Tibial artery (tissue), 4 donors: ENCODE measurements at regions of chr5 and their contacts with region 1.

Region 1: GRCh38 chr5:38548064-38548759 is 8.2 kb downstream of the LIFR start:
- DNase-seq: no peak
- H3K4me3 ChIP-seq: no peak overlapping the region
- H3K27ac ChIP-seq: peak overlapping the region; percentile 43 to 54
- H3K4me1 ChIP-seq: peaks cover 0 to 74% (median 28%) of the 10 kb centered on the region in 4 donors
- H3K27me3 ChIP-seq: no peaks in the 10 kb centered on the region
- CTCF ChIP-seq: no peak

Region 2: DNA sequence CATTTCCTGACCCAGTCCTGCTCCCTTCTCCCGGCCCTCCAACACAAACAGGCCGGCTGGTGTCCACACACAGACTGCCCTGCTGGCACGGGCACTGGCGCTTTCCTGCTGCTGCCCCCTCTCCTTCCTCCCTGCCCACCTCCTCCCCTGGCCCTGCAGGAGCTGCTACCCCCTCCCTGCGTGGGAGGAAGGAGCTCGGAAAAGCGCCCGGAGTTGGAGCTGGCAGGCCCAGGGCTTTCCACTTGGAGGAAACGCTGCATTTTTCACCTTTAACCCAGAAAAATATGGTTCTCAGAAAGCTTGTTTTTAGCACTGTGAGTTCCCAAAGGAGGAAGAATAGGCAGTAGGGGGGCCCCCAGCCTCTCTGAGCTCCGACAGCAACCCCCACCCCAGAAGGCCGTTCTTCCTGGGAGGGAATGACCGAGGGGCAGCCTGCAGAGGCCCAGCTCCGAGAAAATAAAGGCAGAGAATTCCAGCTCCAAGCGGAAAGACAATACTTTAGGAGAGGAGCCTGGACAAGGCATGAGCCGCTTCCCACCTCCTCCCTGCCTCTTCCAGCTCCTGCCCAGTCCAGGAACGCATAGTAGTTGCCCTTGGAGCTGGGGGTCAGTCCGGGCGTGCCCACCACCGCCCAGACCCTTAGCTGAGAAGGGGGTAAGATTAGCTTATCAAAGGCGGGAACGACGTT is 80.7 kb before region 1 on chr5:
- intact Hi-C with region 1: loop called (anchors 2 kb)
- DNase-seq: peak; percentile 76 to 96
- H3K4me3 ChIP-seq: peak overlapping the region; percentile 14 to 19
- H3K27ac ChIP-seq: peak overlapping the region; percentile 78 to 91
- H3K4me1 ChIP-seq: peaks cover 21 to 74% (median 68%) of the 10 kb centered on the region in 4 donors
- H3K27me3 ChIP-seq: no peaks in the 10 kb centered on the region
- CTCF ChIP-seq: no peak